Endothelial cell of umbilical vein (primary cell): ENCODE measurements at regions of chr2 and their contacts with region 1.

Region 1: DNA sequence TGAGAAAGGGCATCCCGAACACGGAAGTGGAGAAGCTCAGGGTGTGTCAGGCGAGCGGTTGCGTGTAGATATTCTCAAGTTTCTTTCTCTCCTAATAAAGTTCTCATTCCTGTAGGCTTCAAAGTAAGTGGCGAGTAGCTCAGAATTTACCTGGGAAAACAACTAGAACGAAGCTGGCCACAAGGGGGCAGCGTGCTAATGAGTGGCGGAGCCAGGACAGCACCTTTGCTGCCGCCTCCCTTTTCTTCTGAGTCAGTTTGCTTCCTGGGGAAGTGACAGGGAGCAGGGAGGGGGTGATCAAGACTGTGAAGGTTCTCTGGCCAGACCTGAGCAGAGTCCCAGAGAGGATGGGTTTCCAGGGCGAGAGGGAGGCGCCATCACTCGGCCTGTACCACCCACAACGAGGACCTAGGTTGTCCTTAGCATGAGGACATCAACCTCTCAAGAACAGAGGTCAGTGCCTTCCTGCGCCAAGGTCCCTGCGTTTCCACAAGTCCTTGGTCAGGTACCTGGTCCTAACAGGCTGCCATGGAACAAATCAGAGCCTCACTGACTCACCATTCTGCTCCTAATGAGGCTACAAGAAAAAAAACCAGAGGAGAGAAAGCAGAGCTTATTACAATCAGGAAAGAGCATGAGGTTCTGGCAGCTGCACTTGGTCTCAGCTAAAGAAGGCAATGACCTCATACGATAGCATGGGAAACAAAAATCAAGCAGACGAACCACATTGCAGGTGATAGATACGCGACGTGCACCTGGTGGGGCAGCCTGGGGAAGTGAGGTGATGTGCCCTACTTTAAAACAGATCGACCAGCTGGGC is 98.6 kb downstream of the PLB1 start:
- DNase-seq: peak; percentile 92
- H3K4me3 ChIP-seq: no peak overlapping the region
- H3K27ac ChIP-seq: peak overlapping the region; percentile 71
- H3K4me1 ChIP-seq: peaks cover 13% of the 10 kb centered on the region
- H3K27me3 ChIP-seq: no peaks in the 10 kb centered on the region
- CTCF ChIP-seq: peak; percentile 71 to 79
- POLR2A ChIP-seq: peak; percentile 41

Region 2: DNA sequence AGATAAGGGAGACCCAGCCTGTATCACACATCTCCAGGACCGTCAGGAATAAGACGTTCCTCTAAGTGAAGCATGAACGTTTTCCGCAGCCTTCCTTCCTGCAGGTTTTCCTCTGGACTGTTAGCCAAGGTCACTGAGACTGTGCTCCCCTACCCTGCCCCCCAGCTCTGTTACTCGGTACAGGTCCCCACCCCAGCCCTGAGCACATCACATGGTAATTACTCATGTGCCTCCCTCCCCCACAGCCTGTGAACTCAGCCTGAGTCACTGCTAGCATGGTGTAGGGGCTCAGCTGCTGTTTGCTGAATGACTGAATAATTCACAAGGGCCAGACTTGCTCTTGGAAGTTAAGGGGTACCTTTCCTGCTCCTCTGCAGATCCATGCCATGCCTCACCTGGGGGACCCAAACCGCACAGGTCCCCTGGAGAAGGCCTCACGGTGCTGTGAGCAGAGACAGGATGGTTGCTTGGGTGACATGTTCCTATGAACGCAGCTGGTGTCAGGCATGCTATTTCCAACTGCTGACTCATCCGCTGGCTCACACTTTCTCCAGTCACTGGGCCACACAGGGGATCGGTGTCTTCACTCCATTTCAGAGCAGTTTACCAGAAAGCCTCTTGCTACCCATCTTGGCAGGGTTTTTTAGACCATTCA is 10.5 kb before region 1 on chr2:
- CTCF ChIA-PET with region 1: interaction called, 64 read pairs
- POLR2A ChIA-PET with region 1: no interaction called
- dilution Hi-C with region 1: no loop called
- intact Hi-C with region 1: loop called (anchors 1 kb)
- DNase-seq: peak; percentile 98
- H3K4me3 ChIP-seq: no peak overlapping the region
- H3K27ac ChIP-seq: peak overlapping the region; percentile 91
- H3K4me1 ChIP-seq: peaks cover 23% of the 10 kb centered on the region
- H3K27me3 ChIP-seq: no peaks in the 10 kb centered on the region
- CTCF ChIP-seq: no peak
- POLR2A ChIP-seq: peak; percentile 36

Region 3: DNA sequence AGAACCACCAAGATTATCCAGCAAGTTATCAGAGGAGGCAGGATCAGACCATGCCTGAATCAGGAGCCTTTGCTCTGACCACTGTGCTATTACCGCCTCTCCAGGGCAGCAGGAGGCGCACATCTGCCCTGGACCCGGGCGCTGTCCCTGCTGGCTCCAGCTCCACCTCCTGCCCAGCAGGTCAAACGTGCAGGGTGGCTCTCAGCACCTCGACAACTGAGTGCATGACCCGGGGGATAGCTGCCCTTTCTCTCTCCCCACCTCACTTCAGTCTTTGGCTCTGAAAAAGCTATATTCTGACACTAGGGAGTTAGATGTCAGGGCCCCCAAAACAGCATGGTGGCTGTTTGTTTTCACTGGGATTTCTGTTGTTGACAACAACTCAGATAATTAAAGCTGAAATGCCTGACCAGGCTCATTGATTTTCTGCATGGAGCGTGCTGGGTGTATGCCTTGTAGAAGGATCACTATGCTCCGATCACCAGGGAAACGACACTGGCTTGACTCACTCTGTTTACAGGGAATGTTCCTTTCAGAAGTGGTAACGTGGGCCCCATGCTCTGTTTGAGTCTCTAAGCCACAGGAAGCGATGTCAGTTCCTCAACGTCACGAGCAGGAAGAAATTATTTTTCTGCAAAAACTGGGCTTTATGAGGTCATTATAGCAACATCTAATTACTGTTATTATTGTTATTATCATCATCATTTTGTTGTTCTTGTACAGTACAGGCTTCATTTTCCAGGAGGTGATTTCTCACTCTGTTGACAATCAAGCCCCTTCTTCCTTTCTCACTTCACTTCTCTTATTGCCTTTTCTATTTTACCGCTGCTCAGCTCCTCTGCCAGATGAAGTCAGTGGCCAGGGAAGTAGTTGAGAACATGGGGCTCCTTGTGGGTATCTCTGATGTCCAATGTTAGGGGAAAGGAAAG is 26.9 kb after region 1 on chr2:
- CTCF ChIA-PET with region 1: interaction called, 51 read pairs
- POLR2A ChIA-PET with region 1: no interaction called
- dilution Hi-C with region 1: no loop called
- intact Hi-C with region 1: loop called (anchors 1 kb)
- DNase-seq: peak; percentile 99
- H3K4me3 ChIP-seq: no peak overlapping the region
- H3K27ac ChIP-seq: peak overlapping the region; percentile 97
- H3K4me1 ChIP-seq: peaks cover 22% of the 10 kb centered on the region
- H3K27me3 ChIP-seq: no peaks in the 10 kb centered on the region
- CTCF ChIP-seq: peak; percentile 48 to 67
- POLR2A ChIP-seq: peak; percentile 74

Region 4: GRCh38 chr2:28751252-28751955 is 156.9 kb after region 1 on chr2 and contains the start of gene PPP1CB:
- CTCF ChIA-PET with region 1: interaction called, 153 read pairs
- POLR2A ChIA-PET with region 1: interaction called, 9 read pairs
- dilution Hi-C with region 1: no loop called
- intact Hi-C with region 1: loop called (anchors 1 kb)
- DNase-seq: peak; percentile 98
- H3K4me3 ChIP-seq: peak within 1 kb of the TSS; percentile 93 to 98 (median 98)
- H3K27ac ChIP-seq: peak within 1 kb of the TSS; percentile 88
- H3K4me1 ChIP-seq: peaks cover 12% of the 10 kb centered on the region
- H3K27me3 ChIP-seq: no peaks in the 10 kb centered on the region
- CTCF ChIP-seq: peak in 1 of 2 donors; percentile 41
- POLR2A ChIP-seq: peak; percentile 81
- total RNA-seq, gene PPP1CB: 157 and 163 TPM in 2 replicates

Region 5: GRCh38 chr2:28801726-28802487 is 207.4 kb after region 1 on chr2:
- CTCF ChIA-PET with region 1: interaction called, 12 read pairs
- POLR2A ChIA-PET with region 1: no interaction called
- dilution Hi-C with region 1: no loop called
- intact Hi-C with region 1: no loop called
- DNase-seq: no peak
- H3K4me3 ChIP-seq: no peak overlapping the region
- H3K27ac ChIP-seq: no peak overlapping the region
- H3K4me1 ChIP-seq: no peaks in the 10 kb centered on the region
- H3K27me3 ChIP-seq: no peaks in the 10 kb centered on the region
- CTCF ChIP-seq: no peak
- POLR2A ChIP-seq: no peak

Region 6: GRCh38 chr2:28835781-28836180 is 241.3 kb after region 1 on chr2:
- CTCF ChIA-PET with region 1: no interaction called
- POLR2A ChIA-PET with region 1: no interaction called
- dilution Hi-C with region 1: no loop called
- intact Hi-C with region 1: no loop called
- DNase-seq: no peak
- H3K4me3 ChIP-seq: no peak overlapping the region
- H3K27ac ChIP-seq: no peak overlapping the region
- H3K4me1 ChIP-seq: peaks cover 3% of the 10 kb centered on the region
- H3K27me3 ChIP-seq: no peaks in the 10 kb centered on the region
- CTCF ChIP-seq: no peak
- POLR2A ChIP-seq: no peak